Aorta (tissue), 5 donors: ENCODE measurements at regions of chr14 and their contacts with region 1.

Region 1: DNA sequence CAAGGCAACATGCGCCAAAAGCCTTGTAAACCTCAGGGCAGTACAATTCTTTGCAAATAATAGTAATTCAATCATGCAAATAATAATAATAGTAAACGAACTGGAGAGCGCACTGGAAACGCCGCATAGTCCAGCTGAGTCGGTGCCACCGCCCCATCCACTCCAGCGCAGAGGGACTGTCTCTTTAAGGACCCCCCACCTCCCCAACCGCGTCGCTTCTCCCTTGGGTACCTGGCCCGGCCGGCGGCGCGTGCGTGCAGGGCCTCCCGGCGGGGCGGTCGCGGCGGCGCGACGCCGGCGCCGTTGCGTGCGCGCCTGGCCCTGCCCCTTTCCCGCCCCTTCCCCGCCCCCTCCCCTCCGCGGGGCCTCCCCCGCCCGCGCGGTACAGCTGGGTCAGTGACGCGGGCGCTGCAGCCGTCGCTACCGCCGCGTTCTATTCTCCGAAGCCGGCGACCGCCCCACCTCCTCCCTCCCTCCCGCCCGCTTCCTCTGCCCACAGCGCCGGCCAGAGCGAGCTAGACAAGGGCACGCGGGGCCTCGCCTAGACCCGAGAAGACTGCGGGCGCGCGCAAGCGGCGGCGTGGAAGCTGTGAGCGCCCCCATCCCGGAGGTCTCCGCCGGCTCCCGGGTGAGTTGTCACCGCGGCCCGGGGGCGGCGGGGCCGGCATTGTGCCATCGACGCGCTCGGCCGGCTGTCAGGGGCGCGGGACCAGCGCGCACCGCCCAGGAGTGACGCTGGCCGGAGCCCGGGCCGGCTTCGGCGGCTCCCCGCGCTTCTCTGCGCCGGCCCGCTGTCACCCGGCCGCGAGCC is at the start of gene SUSD6:
- DNase-seq: peak; percentile 95 to 97
- ATAC-seq: peak; percentile 93
- H3K4me3 ChIP-seq: peak within 1 kb of the TSS; percentile 68 to 96
- H3K27ac ChIP-seq: peak within 1 kb of the TSS; percentile 97 to 100
- H3K4me1 ChIP-seq: peaks cover 3 to 10% of the 10 kb centered on the region in 2 donors
- H3K27me3 ChIP-seq: no peaks in the 10 kb centered on the region
- total RNA-seq, gene SUSD6: 51.3 to 59.9 TPM

Region 2: DNA sequence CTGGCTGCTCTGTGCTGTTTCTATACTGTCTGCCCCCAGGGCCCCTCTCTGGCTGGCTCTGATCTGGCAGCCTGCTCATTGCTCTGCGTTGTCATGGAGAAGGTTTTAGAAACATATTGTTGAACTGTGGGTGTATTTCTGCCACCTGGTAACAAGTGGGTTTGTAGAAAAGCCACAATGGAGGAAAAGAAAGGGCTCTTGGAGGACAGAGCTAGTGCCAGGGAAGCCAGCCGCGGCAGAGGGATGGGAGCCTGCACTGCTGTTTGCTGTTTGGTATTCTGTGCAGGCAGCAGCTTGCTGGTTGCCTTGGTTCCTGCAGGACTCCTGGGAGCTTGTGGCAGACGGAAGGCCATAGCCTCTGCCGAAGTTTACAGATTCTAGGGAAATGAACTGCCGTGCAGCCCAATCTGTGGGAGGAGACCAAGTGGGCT is 51.8 kb before region 1 on chr14:
- intact Hi-C with region 1: no loop called
- DNase-seq: no peak
- ATAC-seq: no peak
- H3K4me3 ChIP-seq: no peak overlapping the region
- H3K27ac ChIP-seq: no peak overlapping the region
- H3K4me1 ChIP-seq: no peaks in the 10 kb centered on the region
- H3K27me3 ChIP-seq: no peaks in the 10 kb centered on the region

Region 3: DNA sequence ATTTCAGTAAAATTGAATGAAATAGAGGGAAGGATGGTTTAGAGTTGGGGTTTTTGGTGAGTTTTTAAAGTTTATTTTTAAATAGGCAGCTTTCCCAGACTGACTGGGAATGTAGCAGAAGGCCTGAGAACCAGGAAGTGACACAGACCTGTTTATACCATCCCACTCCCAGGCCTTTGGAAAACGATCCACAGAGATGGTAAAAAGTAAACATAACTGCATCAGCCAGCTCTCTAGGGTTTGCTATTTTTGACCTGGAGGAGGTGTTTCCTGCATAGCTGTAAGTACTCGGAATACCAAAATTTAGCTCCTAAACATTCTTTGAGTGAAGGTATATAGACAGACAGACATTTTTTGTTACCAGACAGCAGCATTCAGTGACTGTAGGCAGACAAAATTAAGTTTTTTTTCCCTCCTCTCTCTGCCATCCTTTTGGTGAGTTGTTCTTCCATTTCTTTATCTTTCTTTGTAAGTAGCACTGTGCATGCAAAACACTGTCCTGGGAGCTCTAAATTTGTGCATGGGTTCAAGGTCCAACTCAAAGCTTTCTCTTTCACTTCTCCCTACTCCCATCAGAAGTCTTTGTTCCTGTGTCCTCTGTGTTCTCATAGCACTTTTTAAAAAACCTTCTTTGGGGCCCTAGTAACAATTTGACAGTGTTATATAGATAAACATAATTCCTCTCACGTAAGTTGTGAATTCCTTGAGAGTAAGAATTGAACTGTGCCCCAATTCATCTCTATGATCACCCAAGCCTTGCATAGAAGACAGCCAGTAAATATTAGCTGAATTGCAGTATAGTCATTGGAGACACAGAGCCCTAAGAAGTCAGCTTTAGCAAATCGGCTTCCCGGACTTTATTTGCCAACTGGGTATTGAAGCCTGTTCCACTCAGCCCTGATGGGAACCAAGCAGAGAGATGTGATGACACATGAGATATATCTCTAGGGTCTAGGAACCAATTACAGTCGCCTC is 37.4 kb after region 1 on chr14:
- intact Hi-C with region 1: loop called in 1 of 2 experiments (anchors 5 kb)
- DNase-seq: no peak
- ATAC-seq: peak; percentile 39
- H3K4me3 ChIP-seq: no peak overlapping the region
- H3K27ac ChIP-seq: peak overlapping the region; percentile 75 to 84
- H3K4me1 ChIP-seq: peaks cover 13 to 19% of the 10 kb centered on the region in 2 donors
- H3K27me3 ChIP-seq: no peaks in the 10 kb centered on the region

Region 4: GRCh38 chr14:69657950-69658355 is 46.5 kb after region 1 on chr14:
- intact Hi-C with region 1: loop called in 1 of 2 experiments (anchors 5 kb)
- DNase-seq: peak in 1 of 2 donors; percentile 50
- ATAC-seq: peak; percentile 33
- H3K4me3 ChIP-seq: no peak overlapping the region
- H3K27ac ChIP-seq: peak overlapping the region in 1 of 2 donors; percentile 47
- H3K4me1 ChIP-seq: peaks cover 7 to 16% of the 10 kb centered on the region in 2 donors
- H3K27me3 ChIP-seq: no peaks in the 10 kb centered on the region

Region 5: DNA sequence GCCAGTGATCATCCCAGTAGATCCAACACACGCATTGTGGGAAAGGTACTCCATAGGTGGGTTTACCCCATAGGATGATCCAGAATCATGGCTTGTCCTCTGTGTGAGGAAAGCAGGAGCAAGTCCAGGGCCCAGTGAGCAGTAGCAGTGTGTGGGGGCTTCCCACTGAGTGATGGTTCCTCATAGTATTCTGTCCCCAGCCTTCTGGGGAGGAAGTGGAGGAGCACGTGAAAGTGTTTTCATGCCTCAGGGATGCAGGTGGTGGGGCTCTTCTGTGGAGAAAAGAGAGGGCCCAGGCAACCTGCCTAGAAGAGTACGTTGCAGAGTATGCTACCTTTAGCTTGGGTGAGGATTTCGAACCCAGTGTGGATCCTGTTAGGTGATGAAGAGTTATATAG is 56.5 kb after region 1 on chr14:
- intact Hi-C with region 1: loop called (anchors 2 to 5 kb)
- DNase-seq: no peak
- ATAC-seq: no peak
- H3K4me3 ChIP-seq: no peak overlapping the region
- H3K27ac ChIP-seq: no peak overlapping the region
- H3K4me1 ChIP-seq: peaks cover 2 to 27% of the 10 kb centered on the region in 2 donors
- H3K27me3 ChIP-seq: no peaks in the 10 kb centered on the region

Region 6: DNA sequence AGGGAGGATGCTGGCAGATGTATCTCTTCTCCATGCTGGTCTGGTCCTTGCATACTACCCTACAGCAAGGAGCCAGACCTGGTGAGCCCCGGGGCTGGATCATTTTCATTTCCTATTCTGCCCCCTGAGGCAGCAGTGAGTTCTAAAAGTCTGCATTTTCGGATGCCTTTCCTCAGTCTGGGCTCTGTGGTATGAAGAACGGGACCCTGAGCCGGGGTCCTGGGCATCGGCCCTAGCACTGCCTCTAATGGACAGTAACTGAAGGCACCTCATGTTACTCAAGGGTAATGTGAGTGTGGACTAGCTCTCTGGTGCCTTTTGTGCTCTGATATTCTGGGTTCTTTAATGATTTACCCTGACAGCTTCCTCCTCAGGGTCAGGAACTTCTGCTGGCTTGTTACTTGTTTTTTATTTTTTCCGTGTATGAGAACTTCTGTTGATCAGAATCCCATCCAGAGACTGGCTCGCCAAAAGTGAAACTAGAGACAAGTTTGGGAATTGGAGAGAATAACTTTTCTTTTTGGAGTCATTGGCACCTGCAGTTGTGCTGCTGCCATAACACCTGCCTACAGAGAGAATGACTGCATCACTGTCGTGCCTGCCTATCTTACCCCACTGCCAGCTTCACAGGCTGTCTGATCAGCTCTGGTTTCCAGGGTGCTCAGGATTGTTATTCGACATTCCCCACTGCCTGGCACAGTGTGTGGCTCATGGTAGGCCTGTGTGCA is 62.3 kb after region 1 on chr14:
- intact Hi-C with region 1: loop called (anchors 2 to 5 kb)
- DNase-seq: no peak
- ATAC-seq: peak; percentile 39
- H3K4me3 ChIP-seq: no peak overlapping the region
- H3K27ac ChIP-seq: peak overlapping the region in 1 of 2 donors; percentile 76
- H3K4me1 ChIP-seq: peaks cover 7 to 26% of the 10 kb centered on the region in 2 donors
- H3K27me3 ChIP-seq: no peaks in the 10 kb centered on the region

Region 7: DNA sequence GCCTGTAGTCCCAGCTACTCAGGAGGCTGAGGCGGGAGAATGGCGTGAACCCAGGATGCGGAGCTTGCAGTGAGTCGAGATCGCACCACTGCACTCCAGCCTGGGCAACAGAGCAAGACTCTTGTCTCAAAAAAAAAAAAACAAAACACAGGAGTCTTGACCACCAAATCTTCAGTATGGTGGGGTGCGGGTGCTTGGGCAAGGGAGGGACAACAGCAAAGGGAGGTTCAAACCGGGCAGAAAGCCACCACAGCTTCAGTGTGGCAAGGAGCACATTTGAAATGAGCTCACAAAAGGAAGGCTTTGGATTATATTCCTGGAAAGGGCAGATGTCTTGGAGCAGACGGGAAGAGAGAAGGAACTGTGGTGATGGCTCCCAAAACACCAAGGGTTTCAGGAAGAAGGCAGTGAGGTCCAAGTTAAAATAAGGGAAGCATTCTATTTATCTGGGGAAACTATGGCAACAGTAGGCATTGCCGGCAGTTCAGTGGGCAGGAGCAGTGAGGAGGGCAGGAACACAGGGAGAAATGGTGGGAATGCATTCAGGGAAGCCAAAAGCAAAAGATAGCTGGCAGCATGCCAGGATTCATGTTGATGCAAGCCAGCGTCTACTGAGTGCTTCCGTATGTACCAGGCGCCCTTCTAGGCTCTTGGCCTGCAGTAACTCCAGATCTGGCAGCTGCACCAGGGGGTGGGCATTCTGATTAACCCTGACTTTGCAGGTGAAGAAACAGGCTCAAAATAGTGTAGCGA is 104.5 kb after region 1 on chr14:
- intact Hi-C with region 1: loop called in 1 of 2 experiments (anchors 2 kb)
- DNase-seq: peak; percentile 83 to 89
- ATAC-seq: peak; percentile 75
- H3K4me3 ChIP-seq: no peak overlapping the region
- H3K27ac ChIP-seq: peak overlapping the region in 1 of 2 donors; percentile 86
- H3K4me1 ChIP-seq: no peaks in the 10 kb centered on the region
- H3K27me3 ChIP-seq: no peaks in the 10 kb centered on the region